Aorta (tissue), 5 donors: ENCODE measurements at regions of chr7 and their contacts with region 1.

Region 1: DNA sequence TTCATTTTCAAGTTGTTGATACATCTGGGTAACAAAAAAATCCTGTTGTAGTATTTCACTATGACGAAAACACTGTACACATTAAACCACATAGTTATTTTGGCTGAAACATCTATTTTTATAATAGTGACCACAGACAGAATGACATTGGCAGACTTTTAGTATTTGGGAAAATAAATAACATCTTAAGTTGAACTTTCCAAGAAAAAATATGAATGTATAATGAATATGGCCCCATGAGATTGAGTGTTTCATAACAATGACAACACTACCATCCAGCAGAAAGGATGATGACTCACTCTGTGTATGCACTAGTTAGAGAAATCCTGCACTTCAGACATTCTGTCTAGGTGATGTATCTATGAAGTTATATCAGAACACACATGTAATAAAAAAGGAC is 118.1 kb downstream of the SEMA3D start:
- DNase-seq: no peak
- ATAC-seq: peak; percentile 89
- H3K4me3 ChIP-seq: no peak overlapping the region
- H3K27ac ChIP-seq: no peak overlapping the region
- H3K4me1 ChIP-seq: peaks cover 0 to 6% of the 10 kb centered on the region in 2 donors
- H3K27me3 ChIP-seq: no peaks in the 10 kb centered on the region

Region 2: DNA sequence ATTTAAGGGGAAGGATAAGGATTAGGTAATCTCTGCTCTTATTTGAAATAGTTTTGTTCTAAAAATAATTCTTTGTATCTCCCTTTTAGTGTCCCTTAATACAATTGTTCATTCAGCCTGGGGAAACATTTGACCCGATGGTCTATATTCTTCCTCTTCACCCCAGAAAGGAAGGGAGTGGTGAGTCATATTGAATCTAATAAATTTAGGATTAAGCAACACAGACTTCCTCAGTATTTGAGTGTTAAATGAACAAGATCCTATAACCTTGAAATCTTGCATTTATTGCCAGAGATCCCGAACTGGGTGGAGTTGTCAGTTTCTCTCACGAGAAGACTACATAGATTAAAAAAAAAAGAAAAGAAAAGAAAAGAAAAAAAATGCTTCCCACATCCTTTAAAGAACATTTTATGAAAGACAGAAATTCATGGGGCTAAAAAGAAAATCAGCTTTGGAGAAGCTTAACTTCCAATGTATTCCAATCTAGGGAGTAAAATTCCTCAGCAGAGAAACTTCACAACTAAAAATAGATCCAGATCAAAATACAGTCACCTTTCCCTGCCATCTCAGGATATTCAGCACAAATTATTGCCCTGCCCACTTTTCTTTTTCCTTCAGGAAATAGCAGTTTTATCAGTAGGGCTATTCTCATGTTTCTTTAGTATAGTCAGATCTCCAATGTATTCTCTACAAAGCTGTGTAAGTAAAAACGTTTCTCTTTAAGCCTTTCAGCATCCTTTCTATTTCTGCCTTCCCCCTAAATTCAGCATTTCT is 35.8 kb after region 1 on chr7:
- intact Hi-C with region 1: loop called in 1 of 2 experiments (anchors 5 kb)
- DNase-seq: no peak
- ATAC-seq: peak; percentile 68
- H3K4me3 ChIP-seq: no peak overlapping the region
- H3K27ac ChIP-seq: no peak overlapping the region
- H3K4me1 ChIP-seq: peaks cover 0 to 6% of the 10 kb centered on the region in 2 donors
- H3K27me3 ChIP-seq: no peaks in the 10 kb centered on the region

Region 3: GRCh38 chr7:85172530-85172941 is 103.7 kb after region 1 on chr7:
- intact Hi-C with region 1: loop called in 1 of 2 experiments (anchors 5 kb)
- DNase-seq: peak; percentile 40 to 56
- ATAC-seq: peak; percentile 87
- H3K4me3 ChIP-seq: no peak overlapping the region
- H3K27ac ChIP-seq: peak overlapping the region in 1 of 2 donors; percentile 90
- H3K4me1 ChIP-seq: peaks cover 0 to 3% of the 10 kb centered on the region in 2 donors
- H3K27me3 ChIP-seq: no peaks in the 10 kb centered on the region